Activated CD4-positive, alpha-beta T cell treated with anti-CD3 and anti-CD28 coated beads, Interleukin-2, amount 10 ng/mL, durations not matched to agents 7 days and 5 days (primary cell): ENCODE measurements at regions of chr11 and their contacts with region 1.

Region 1: DNA sequence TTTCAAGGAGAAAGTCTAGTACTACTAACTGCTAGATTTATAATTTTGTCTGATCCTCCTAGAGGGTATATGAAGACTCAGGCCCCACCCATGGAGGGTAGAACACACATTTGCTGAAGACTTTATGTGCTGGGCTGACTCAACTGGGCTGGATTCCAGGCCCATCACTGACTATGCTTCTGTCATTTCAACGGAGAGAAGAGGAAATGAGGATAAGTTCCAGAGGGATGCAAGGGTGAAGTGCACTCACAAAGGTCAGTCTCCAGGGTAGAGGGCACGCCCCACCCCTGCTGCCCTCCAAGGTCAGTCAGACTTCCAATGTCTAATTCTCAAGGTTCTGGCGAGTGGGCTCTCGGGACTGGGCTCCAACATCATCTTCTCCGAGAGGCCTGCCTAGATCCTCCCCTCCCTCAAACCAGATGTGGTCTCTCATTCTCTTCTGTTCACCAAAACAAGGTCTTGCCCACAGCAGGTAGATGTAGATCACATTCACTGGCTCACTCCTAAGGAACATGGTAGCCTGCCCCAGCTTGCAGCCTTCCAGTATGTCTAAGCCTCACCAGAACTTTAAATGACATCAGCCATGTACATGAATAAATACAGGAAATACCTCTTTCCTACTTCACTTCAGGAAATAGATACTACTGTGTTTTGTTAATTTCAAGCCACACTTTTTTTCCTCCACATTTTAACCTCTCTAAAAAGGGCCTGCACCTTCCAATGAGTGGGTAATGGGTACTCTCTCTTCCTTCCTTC is 7.3 kb upstream of the C11orf86 start:
- DNase-seq: no peak
- H3K4me3 Mint-ChIP-seq: no peak overlapping the region
- H3K27ac Mint-ChIP-seq: no peak overlapping the region
- H3K4me1 Mint-ChIP-seq: peaks cover 15% of the 10 kb centered on the region
- H3K27me3 Mint-ChIP-seq: peaks cover 3% of the 10 kb centered on the region

Region 2: DNA sequence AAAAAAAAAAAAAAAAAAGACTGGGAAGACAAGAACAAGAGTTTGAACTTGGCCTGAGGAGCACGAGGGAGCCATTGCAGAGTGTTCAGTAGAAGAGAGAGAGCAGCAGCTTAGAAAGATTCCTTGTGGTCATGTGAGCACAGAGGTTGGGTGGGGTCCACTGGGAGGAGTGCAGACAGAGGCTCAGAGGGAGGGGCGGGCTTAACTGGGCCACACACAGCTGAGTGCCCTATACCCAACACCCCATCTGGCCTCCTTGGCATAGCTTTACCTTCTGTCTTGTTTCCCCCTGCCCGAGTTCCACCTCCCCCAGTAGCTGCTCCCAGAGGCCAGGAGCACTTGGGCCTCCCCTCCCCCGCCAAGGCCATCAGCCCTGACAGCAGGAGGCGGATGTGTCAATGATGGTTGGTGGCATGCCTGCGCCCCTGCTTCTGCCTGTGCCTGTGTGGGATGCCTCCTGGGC is 19.3 kb after region 1 on chr11:
- CTCF ChIA-PET with region 1: no interaction called
- POLR2A ChIA-PET with region 1: no interaction called
- DNase-seq: no peak
- H3K4me3 Mint-ChIP-seq: no peak overlapping the region
- H3K27ac Mint-ChIP-seq: no peak overlapping the region
- H3K4me1 Mint-ChIP-seq: peaks cover 2% of the 10 kb centered on the region
- H3K27me3 Mint-ChIP-seq: peaks cover 16% of the 10 kb centered on the region

Region 3: DNA sequence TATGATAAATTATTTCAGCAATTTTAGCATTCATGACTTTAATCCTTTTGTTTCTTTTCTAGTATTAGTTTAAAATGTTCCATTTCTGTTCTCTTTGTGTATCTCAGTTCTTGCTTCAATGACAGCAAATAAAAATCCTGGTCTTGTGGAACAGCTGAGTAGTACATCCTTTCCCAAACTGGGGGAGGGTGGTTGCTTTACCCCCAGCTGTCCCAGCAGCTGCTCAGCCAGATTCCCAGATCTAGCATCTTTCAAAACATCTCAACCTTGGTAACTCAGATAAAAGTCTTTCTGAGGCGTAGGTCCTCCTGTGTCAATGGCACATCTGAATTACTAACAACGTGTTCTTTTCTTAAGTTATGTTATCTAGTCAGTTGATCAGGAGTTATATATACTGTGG is 226.2 kb after region 1 on chr11:
- CTCF ChIA-PET with region 1: no interaction called
- POLR2A ChIA-PET with region 1: interaction called, 12 read pairs
- DNase-seq: no peak
- H3K4me3 Mint-ChIP-seq: no peak overlapping the region
- H3K27ac Mint-ChIP-seq: no peak overlapping the region
- H3K4me1 Mint-ChIP-seq: peaks cover 15% of the 10 kb centered on the region
- H3K27me3 Mint-ChIP-seq: no peaks in the 10 kb centered on the region